CD8-positive, alpha-beta T cell (primary cell): ENCODE measurements at regions of chr7 and their contacts with region 1.

Region 1: DNA sequence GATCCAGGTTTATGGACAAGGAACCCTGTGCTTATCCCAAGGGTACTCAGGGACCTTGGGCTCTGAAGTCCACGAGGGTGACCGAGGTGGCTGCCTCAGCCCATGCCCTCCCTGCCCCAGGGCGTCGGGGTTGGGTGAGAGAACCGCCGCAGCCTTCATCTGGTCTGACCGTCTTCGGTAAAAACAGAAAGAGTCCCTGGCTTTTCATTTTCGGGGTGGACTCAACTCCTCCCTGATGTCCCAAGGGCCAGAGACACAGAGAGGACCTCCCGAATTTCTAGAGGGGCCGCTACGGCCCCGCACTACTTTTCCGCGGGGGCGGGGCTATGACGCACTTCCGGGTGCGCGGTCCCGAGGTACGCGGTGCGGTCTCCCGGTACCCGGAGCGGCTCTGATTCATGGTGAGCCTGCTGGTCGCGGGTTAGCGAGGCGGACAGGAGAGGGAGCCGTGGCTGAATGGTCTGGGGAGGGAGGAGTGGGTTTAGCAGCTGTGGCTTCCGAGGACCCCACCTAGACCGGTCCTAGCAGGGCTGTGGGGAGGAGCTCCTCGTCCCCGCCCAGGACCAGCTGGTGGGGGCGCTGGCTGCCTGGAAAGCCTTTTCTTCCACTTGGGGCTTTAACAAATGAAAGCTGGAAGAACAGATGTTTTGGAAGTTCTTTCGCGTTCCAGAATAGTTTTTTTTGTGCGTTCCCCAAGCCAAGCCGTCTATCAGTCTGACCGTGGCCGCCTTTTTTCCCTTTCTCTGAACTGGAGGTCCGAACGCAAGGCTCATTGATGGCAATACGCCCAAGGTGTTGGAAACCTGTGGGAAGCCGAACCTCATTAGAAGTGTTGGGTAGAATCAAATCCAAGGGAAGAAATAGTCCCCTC is at the start of gene ZSCAN21:
- DNase-seq: peak; percentile 51 to 91 (median 84)
- ATAC-seq: peak; percentile 89
- H3K4me3 ChIP-seq: peak within 1 kb of the TSS; percentile 69 to 99
- H3K4me3 Mint-ChIP-seq: peak within 1 kb of the TSS; percentile 93
- H3K27ac ChIP-seq: peak within 1 kb of the TSS; percentile 87 to 96
- H3K27ac Mint-ChIP-seq: peak within 1 kb of the TSS; percentile 98
- H3K4me1 ChIP-seq: peaks cover 12% of the 10 kb centered on the region
- H3K4me1 Mint-ChIP-seq: peaks cover 25% of the 10 kb centered on the region
- H3K27me3 ChIP-seq: no peaks in the 10 kb centered on the region
- H3K27me3 Mint-ChIP-seq: no peaks in the 10 kb centered on the region
- CTCF ChIP-seq: no peak
- total RNA-seq, gene ZSCAN21: 4.8 to 5.7 TPM

Region 2: DNA sequence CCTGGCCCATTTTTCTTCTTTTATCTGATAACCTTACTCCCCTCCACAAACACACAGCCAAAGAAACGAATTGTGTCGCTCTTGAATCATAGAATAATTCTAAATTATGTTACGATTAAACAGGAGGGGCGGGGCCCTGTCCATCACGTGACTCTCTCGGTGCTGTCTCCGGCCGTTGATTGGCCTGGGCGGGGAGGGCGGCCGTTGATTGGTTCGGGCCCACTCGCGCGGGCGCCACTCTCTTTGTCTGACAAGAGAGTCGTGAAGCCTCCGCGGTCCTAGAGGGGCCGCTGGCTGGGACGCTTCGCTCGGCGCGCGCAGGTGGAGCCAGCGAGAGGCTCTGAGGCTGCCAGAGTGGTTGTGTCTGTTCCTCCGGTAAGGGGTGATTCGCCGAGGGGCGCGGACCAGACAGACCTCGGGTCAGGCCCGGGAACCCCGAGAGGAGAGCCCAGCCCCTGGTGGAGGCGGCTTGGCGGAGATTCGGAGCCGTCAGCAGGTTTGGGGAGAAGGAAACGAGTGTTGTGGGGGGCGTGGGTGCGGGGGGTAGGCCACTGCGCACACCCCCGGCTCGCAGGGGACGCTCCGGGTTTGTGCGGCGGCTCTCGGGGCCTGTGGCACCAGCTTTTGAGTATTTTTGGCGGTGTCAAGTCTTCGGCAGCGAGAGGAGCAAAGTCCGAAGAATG is 577.0 kb before region 1 on chr7 and contains the start of gene ZNF789:
- CTCF ChIA-PET with region 1: no interaction called
- POLR2A ChIA-PET with region 1: no interaction called
- intact Hi-C with region 1: loop called in 1 of 2 experiments (anchors 1 kb)
- DNase-seq: peak; percentile 96 to 99 (median 98)
- ATAC-seq: peak; percentile 97
- H3K4me3 ChIP-seq: peak within 1 kb of the TSS; percentile 75 to 93
- H3K4me3 Mint-ChIP-seq: peak within 1 kb of the TSS; percentile 98
- H3K27ac ChIP-seq: peak within 1 kb of the TSS; percentile 60 to 88
- H3K27ac Mint-ChIP-seq: peak within 1 kb of the TSS; percentile 96
- H3K4me1 ChIP-seq: peaks cover 19% of the 10 kb centered on the region
- H3K4me1 Mint-ChIP-seq: peaks cover 36% of the 10 kb centered on the region
- H3K27me3 ChIP-seq: no peaks in the 10 kb centered on the region
- H3K27me3 Mint-ChIP-seq: no peaks in the 10 kb centered on the region
- CTCF ChIP-seq: no peak
- total RNA-seq, gene ZNF789: 12.9 to 14.1 TPM

Region 3: DNA sequence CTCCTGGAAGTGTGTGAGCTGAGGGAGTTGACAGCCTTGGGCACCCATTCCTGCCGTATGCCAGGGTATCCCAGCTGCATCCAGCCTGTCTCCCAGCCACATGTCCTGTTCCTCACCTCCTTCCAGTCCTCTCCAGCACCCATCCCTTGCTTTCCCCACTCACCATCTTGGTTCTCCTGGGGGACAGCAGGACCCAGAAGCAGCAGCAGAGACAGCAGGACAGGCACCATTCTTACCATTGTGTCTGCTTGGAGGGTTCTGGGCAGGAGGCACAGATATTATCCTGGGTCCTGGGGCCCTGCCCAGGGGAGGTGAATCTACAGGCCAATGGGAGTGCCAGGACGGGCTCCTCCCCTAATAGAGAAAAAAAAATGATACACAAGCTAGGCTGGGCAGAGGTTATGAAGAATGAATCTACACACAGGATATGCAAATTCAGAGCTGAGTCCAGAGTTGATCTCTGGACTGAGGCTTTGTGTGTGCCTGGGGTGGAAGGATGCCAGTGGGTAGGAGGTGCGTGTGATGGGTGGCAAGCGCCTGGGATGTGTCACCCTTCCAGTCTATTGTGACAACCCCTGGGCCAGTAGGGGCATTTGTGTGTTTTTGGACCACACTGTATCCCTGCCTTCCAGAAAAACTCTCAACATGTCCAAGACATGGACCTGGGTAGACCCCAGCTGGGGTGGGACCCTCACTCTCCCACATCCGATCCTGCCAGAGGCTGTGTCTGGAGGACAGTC is 73.7 kb before region 1 on chr7 and contains the start of gene AZGP1:
- CTCF ChIA-PET with region 1: interaction called, 5 read pairs
- POLR2A ChIA-PET with region 1: no interaction called
- intact Hi-C with region 1: loop called in 1 of 2 experiments (anchors 5 kb)
- DNase-seq: no peak
- ATAC-seq: no peak
- H3K4me3 ChIP-seq: no peak within 1 kb of the TSS
- H3K4me3 Mint-ChIP-seq: no peak within 1 kb of the TSS
- H3K27ac ChIP-seq: no peak within 1 kb of the TSS
- H3K27ac Mint-ChIP-seq: no peak within 1 kb of the TSS
- H3K4me1 ChIP-seq: no peaks in the 10 kb centered on the region
- H3K4me1 Mint-ChIP-seq: peaks cover 6% of the 10 kb centered on the region
- H3K27me3 ChIP-seq: no peaks in the 10 kb centered on the region
- H3K27me3 Mint-ChIP-seq: peaks cover 4% of the 10 kb centered on the region
- CTCF ChIP-seq: no peak
- total RNA-seq, gene AZGP1: not detected

Region 4: DNA sequence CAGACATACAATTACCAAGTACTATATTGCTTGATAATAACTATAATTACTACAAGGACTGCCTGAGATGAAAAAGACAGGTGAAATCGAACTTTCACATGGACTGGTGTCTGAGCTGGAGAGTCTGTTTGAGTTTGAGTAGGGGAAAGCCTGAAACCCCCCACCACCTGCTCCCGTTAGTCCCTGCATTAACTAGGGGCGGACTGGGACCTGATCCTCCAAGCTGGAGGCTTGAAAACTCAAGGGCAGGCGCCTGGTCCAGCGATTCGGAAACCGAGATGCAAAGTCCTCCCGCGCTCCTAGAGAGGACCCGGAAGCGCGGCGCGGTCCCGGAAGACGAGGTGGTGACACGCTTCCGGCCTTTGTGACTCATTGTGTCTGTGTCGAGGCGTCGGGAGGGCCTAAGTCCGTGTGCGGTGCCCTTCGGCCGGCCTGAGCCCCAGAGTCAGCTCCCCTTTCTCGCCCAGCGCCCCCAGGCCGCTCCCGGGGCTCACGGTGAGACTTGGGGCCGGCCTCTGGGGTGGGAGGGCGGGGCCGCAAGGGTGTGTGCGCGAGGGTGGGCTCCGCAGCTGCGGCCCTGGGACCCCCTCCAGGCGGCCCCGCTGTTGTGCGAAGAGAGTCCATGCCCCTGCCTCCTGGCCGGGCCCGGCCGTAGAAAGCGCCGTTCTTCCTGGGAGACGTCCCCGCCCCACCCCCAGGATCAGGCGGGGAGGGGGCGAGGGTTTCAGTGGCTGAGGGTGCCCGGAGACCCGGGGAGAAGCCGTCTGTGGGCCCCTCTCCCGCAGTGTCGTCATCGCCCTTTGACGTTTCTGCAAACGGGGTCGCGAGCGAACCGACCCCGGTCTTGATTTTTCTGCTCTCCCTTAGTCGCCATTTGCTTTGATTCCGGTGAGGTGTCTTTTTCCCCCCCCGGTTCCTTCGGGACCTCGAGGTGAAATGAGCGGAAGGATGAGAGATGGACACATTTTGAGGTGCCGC is 34.2 kb before region 1 on chr7 and contains the start of gene ZKSCAN1:
- CTCF ChIA-PET with region 1: no interaction called
- POLR2A ChIA-PET with region 1: interaction called, 3 read pairs
- intact Hi-C with region 1: loop called (anchors 1 to 2 kb)
- DNase-seq: peak; percentile 67 to 95 (median 83)
- ATAC-seq: peak; percentile 91
- H3K4me3 ChIP-seq: peak within 1 kb of the TSS; percentile 61 to 100
- H3K4me3 Mint-ChIP-seq: peak within 1 kb of the TSS; percentile 95
- H3K27ac ChIP-seq: peak within 1 kb of the TSS; percentile 82 to 97
- H3K27ac Mint-ChIP-seq: peak within 1 kb of the TSS; percentile 98
- H3K4me1 ChIP-seq: peaks cover 22% of the 10 kb centered on the region
- H3K4me1 Mint-ChIP-seq: peaks cover 52% of the 10 kb centered on the region
- H3K27me3 ChIP-seq: no peaks in the 10 kb centered on the region
- H3K27me3 Mint-ChIP-seq: no peaks in the 10 kb centered on the region
- CTCF ChIP-seq: no peak
- total RNA-seq, gene ZKSCAN1: 30.0 to 35.9 TPM

Region 5: GRCh38 chr7:100126931-100127865 is 77.5 kb after region 1 on chr7 and contains the start of gene MBLAC1:
- CTCF ChIA-PET with region 1: interaction called, 4 read pairs
- POLR2A ChIA-PET with region 1: no interaction called
- intact Hi-C with region 1: loop called in 1 of 2 experiments (anchors 2 kb)
- DNase-seq: peak; percentile 83 to 97 (median 93)
- ATAC-seq: peak; percentile 83
- H3K4me3 ChIP-seq: peak within 1 kb of the TSS; percentile 81 to 99
- H3K4me3 Mint-ChIP-seq: peak within 1 kb of the TSS; percentile 100
- H3K27ac ChIP-seq: peak within 1 kb of the TSS; percentile 92 to 98
- H3K27ac Mint-ChIP-seq: peak within 1 kb of the TSS; percentile 100
- H3K4me1 ChIP-seq: peaks cover 24% of the 10 kb centered on the region
- H3K4me1 Mint-ChIP-seq: peaks cover 39% of the 10 kb centered on the region
- H3K27me3 ChIP-seq: no peaks in the 10 kb centered on the region
- H3K27me3 Mint-ChIP-seq: no peaks in the 10 kb centered on the region
- CTCF ChIP-seq: no peak
- total RNA-seq, gene MBLAC1: 4.2 to 4.6 TPM